ENCODE measurements at regions of chr6 and their contacts with region 1.

Region 1: DNA sequence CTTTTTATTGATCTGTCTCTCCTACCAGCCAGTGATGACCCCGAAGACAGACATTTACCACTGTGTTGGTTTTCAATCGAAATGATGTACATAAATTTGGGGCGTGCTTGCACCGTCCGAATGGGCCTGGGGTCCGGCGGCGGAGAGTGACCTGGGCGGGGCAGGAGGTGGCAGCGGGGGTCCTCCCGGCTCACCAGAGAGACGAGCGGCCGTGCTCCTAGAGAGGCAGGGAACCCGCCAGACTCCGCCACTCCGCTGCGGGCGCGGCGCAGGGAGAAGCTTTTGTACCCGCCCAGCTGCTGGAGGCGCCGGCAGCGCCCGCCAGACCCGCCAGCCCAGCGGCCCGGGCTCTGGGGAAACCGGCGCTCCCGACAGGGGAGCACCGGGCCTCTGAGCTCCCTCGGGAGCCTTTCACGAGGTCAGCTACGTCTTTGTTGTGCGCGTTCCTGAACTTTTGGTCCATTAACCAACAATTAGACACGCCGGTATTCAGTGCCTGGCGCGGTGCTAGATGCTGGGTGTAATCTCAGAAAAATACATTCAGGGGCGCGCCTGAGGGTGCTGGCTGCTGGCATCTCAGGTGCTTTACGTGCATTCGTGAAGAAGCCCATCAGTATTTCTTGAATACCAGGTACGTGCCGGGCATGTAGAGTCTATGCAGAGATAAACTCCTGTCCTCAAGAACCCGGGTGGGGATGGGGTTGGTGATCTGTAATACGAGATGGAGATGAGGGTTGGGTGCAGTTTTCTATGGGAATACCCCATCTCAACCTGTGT is at the start of gene PGBD1:
- DNase-seq: peak; percentile 67
- ATAC-seq: peak; percentile 99
- H3K4me3 ChIP-seq: peak within 1 kb of the TSS; percentile 79 to 94 (median 89)
- H3K27ac ChIP-seq: peak within 1 kb of the TSS; percentile 42
- H3K4me1 ChIP-seq: peaks cover 16% of the 10 kb centered on the region
- H3K27me3 ChIP-seq: no peaks in the 10 kb centered on the region; a peak in 1 of 5 replicates
- CTCF ChIP-seq: peak; percentile 39
- EP300 ChIP-seq: peak in 1 of 2 experiments; percentile 5; a peak in 1 of 4 replicates
- POLR2A ChIP-seq: peak; percentile 71 to 72
- RAD21 ChIP-seq: peak; percentile 76
- total RNA-seq, gene PGBD1: 6.9 and 8.5 TPM in 2 replicates

Region 2: GRCh38 chr6:28225056-28225834 is 56.2 kb before region 1 on chr6 and contains the start of gene ZSCAN9:
- CTCF ChIA-PET with region 1: no interaction called
- POLR2A ChIA-PET with region 1: no interaction called
- in situ Hi-C with region 1: no loop called
- intact Hi-C with region 1: loop called (anchors 2 kb)
- DNase-seq: peak; percentile 86
- ATAC-seq: peak; percentile 97
- H3K4me3 ChIP-seq: peak within 1 kb of the TSS; percentile 91 to 99 (median 99)
- H3K27ac ChIP-seq: peak within 1 kb of the TSS; percentile 55
- H3K4me1 ChIP-seq: peaks cover 24% of the 10 kb centered on the region
- H3K27me3 ChIP-seq: no peaks in the 10 kb centered on the region; a peak in 2 of 5 replicates
- CTCF ChIP-seq: peak; percentile 35
- EP300 ChIP-seq: no peak
- POLR2A ChIP-seq: peak; percentile 79 to 81
- RAD21 ChIP-seq: peak; percentile 45; the same call in 1 of the 2 replicates
- total RNA-seq, gene ZSCAN9: 17.2 and 17.8 TPM in 2 replicates

Region 3: DNA sequence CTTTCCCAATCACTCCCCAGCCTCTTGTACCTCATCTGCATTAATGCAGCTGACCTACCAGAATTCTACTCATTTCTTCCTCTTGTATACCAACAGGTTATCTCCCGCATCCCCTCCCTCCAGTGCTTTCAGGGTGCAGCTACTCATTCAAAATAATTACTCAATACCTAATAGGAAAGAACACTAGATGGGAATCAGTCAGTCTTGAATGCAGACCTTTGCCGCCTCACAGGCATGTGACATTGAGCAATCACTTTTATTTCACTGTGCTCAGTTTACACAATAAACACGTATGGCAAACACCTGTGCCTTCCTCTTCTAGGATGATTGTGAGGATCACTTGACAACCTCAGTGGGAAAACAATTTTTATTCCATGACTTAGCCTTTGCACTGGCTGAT is 41.2 kb after region 1 on chr6:
- CTCF ChIA-PET with region 1: no interaction called
- POLR2A ChIA-PET with region 1: interaction called, 10 read pairs
- in situ Hi-C with region 1: no loop called
- intact Hi-C with region 1: loop called (anchors 5 kb)
- DNase-seq: peak; percentile 62
- ATAC-seq: peak; percentile 12; the same call in 1 of the 3 replicates
- H3K4me3 ChIP-seq: no peak overlapping the region
- H3K27ac ChIP-seq: no peak overlapping the region
- H3K4me1 ChIP-seq: peaks cover 36% of the 10 kb centered on the region
- H3K27me3 ChIP-seq: no peaks in the 10 kb centered on the region
- CTCF ChIP-seq: no peak
- EP300 ChIP-seq: peak in 1 of 2 experiments; percentile 59; a peak in 2 of 4 replicates
- POLR2A ChIP-seq: no peak
- RAD21 ChIP-seq: no peak

Region 4: GRCh38 chr6:28349892-28350737 is 68.6 kb after region 1 on chr6 and contains the start of gene ZKSCAN3:
- CTCF ChIA-PET with region 1: no interaction called
- POLR2A ChIA-PET with region 1: interaction called, 20 read pairs
- in situ Hi-C with region 1: no loop called
- intact Hi-C with region 1: loop called (anchors 1 kb)
- DNase-seq: peak; percentile 84
- ATAC-seq: peak; percentile 97
- H3K4me3 ChIP-seq: peak within 1 kb of the TSS; percentile 63 to 98 (median 85)
- H3K27ac ChIP-seq: peak within 1 kb of the TSS; percentile 77
- H3K4me1 ChIP-seq: peaks cover 32% of the 10 kb centered on the region
- H3K27me3 ChIP-seq: no peaks in the 10 kb centered on the region; a peak in 1 of 5 replicates
- CTCF ChIP-seq: 0 out of 2 replicates have a peak, but pooled peaks have one; percentile 19
- EP300 ChIP-seq: no peak
- POLR2A ChIP-seq: peak; percentile 81 to 88
- RAD21 ChIP-seq: peak; percentile 27; the same call in 1 of the 2 replicates
- total RNA-seq, gene ZKSCAN3: 7.4 and 8.1 TPM in 2 replicates

Region 5: GRCh38 chr6:28355743-28356665 is 74.5 kb after region 1 on chr6:
- CTCF ChIA-PET with region 1: interaction called, 3 read pairs
- POLR2A ChIA-PET with region 1: interaction called, 20 read pairs
- in situ Hi-C with region 1: no loop called
- intact Hi-C with region 1: loop called (anchors 1 kb)
- DNase-seq: peak; percentile 90
- ATAC-seq: peak; percentile 89
- H3K4me3 ChIP-seq: peak overlapping the region; percentile 70 to 82 (median 77)
- H3K27ac ChIP-seq: peak overlapping the region; percentile 75
- H3K4me1 ChIP-seq: peaks cover 33% of the 10 kb centered on the region
- H3K27me3 ChIP-seq: no peaks in the 10 kb centered on the region; a peak in 1 of 5 replicates
- CTCF ChIP-seq: peak; percentile 91
- EP300 ChIP-seq: no peak
- POLR2A ChIP-seq: peak in 1 of 2 experiments; percentile 65; a peak in 1 of 4 replicates
- RAD21 ChIP-seq: peak; percentile 81

Measured in HepG2 (cell line).